ENCODE measurements at regions of chr5 and their contacts with region 1.

Region 1: GRCh38 chr5:119267958-119268386 is 87.8 kb upstream of the TNFAIP8 start:
- DNase-seq: peak; percentile 74 to 93 (median 83)
- H3K4me3 ChIP-seq: peak overlapping the region; percentile 53 to 83
- H3K4me3 Mint-ChIP-seq: peak overlapping the region; percentile 97 to 100 (median 100)
- H3K27ac ChIP-seq: peak overlapping the region; percentile 90
- H3K27ac Mint-ChIP-seq: peak overlapping the region; percentile 96 to 99 (median 97)
- H3K4me1 ChIP-seq: peaks cover 30% of the 10 kb centered on the region
- H3K4me1 Mint-ChIP-seq: peaks cover 37 to 72% (median 43%) of the 10 kb centered on the region in 4 donors
- H3K27me3 ChIP-seq: no peaks in the 10 kb centered on the region
- H3K27me3 Mint-ChIP-seq: no peaks in the 10 kb centered on the region

Region 2: DNA sequence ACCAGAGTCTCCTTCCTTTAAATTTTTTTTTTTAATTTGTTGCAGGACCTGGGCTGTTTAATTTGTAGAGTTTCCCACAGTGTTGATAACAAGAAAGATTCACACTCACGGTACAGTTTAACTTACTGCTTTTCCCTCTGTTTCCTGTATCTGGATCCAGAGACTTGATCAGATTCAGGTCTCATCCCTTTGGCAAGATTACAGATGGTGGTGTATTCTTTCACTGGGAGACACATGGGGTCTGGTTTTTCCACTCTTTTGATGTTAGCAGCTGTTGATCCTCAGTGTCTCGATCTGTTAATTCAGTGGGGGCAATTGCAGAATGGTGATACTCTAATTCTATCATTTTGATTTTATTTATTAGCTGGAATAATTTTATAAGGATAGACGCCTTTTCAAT is 12.4 kb after region 1 on chr5:
- CTCF ChIA-PET with region 1: interaction called, 10 read pairs
- POLR2A ChIA-PET with region 1: interaction called, 44 read pairs
- intact Hi-C with region 1: loop called (anchors 1 kb)
- DNase-seq: no peak
- H3K4me3 ChIP-seq: no peak overlapping the region
- H3K4me3 Mint-ChIP-seq: peak overlapping the region in 7 of 8 donors; percentile 30 to 92 (median 74)
- H3K27ac ChIP-seq: peak overlapping the region; percentile 25
- H3K27ac Mint-ChIP-seq: peak overlapping the region; percentile 1 to 99 (median 58)
- H3K4me1 ChIP-seq: peaks cover 99% of the 10 kb centered on the region
- H3K4me1 Mint-ChIP-seq: peaks cover 83 to 100% (median 93%) of the 10 kb centered on the region in 4 donors
- H3K27me3 ChIP-seq: no peaks in the 10 kb centered on the region
- H3K27me3 Mint-ChIP-seq: peaks cover 0 to 2% of the 10 kb centered on the region in 2 donors

Region 3: GRCh38 chr5:119302916-119303897 is 35.2 kb after region 1 on chr5:
- CTCF ChIA-PET with region 1: interaction called, 37 read pairs
- POLR2A ChIA-PET with region 1: interaction called, 187 read pairs
- intact Hi-C with region 1: loop called (anchors 1 kb)
- DNase-seq: no peak
- H3K4me3 ChIP-seq: peak overlapping the region; percentile 13 to 17
- H3K4me3 Mint-ChIP-seq: peak overlapping the region; percentile 17 to 96 (median 74)
- H3K27ac ChIP-seq: peak overlapping the region; percentile 43
- H3K27ac Mint-ChIP-seq: peak overlapping the region; percentile 80 to 99 (median 94)
- H3K4me1 ChIP-seq: peaks cover 83% of the 10 kb centered on the region
- H3K4me1 Mint-ChIP-seq: peaks cover 64 to 97% (median 79%) of the 10 kb centered on the region in 4 donors
- H3K27me3 ChIP-seq: no peaks in the 10 kb centered on the region
- H3K27me3 Mint-ChIP-seq: no peaks in the 10 kb centered on the region

Region 4: DNA sequence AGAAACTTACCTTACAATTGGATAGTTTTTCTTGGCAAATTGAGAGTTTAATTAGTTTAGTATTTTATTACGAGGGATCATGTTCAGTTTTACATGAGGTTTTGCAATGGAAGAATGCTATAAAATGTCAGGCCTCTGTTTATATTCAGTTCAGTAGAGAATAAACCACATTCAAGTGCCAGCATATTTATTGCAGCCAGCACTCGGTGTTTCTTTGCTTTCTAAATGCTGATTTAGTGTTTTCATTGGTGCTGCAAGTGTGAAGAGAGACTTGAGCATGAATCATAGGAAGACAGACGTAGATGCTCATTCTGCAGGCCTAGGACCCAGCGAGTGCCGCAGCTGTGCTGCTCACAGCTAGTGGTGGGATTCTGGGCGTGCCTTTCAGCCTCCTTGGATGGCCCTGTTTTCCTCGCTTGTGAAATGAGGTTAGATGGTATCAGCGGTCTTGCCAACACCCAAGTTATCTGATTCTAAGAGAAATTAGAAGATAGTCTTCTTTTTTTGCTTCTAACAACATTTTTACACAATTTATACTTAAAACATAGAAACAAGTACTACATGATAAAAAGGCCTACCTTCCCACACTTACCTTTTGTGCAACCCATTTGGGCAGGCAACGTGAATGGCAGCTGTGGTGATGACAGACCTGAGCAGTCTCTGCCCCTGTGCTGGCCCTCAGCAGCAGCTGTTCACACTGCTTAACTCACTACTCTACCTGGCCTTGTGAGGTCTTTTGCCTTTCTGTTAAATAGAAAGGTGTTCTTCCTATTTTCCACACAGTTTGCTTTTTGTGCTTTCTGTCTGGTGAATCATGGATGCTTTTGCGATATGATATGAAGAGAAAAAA is 61.0 kb after region 1 on chr5:
- CTCF ChIA-PET with region 1: interaction called, 25 read pairs
- POLR2A ChIA-PET with region 1: interaction called, 357 read pairs
- intact Hi-C with region 1: loop called (anchors 1 kb)
- DNase-seq: peak; percentile 56 to 89 (median 63)
- H3K4me3 ChIP-seq: peak overlapping the region; percentile 24 to 39
- H3K4me3 Mint-ChIP-seq: peak overlapping the region; percentile 70 to 89 (median 79)
- H3K27ac ChIP-seq: peak overlapping the region; percentile 75
- H3K27ac Mint-ChIP-seq: peak overlapping the region; percentile 93 to 97 (median 96)
- H3K4me1 ChIP-seq: peaks cover 91% of the 10 kb centered on the region
- H3K4me1 Mint-ChIP-seq: peaks cover 68 to 92% (median 78%) of the 10 kb centered on the region in 4 donors
- H3K27me3 ChIP-seq: no peaks in the 10 kb centered on the region
- H3K27me3 Mint-ChIP-seq: no peaks in the 10 kb centered on the region

Region 5: GRCh38 chr5:119355685-119356611 is 88.0 kb after region 1 on chr5 and contains the start of gene TNFAIP8:
- CTCF ChIA-PET with region 1: interaction called, 5 read pairs
- POLR2A ChIA-PET with region 1: interaction called, 30 read pairs
- intact Hi-C with region 1: loop called (anchors 5 kb)
- DNase-seq: peak in 2 of 5 donors; percentile 12 to 75
- H3K4me3 ChIP-seq: peak within 1 kb of the TSS; percentile 51 to 55
- H3K4me3 Mint-ChIP-seq: peak within 1 kb of the TSS; percentile 82 to 97 (median 90)
- H3K27ac ChIP-seq: peak within 1 kb of the TSS; percentile 78
- H3K27ac Mint-ChIP-seq: peak within 1 kb of the TSS; percentile 86 to 97 (median 93)
- H3K4me1 ChIP-seq: peaks cover 93% of the 10 kb centered on the region
- H3K4me1 Mint-ChIP-seq: peaks cover 75 to 95% (median 86%) of the 10 kb centered on the region in 4 donors
- H3K27me3 ChIP-seq: no peaks in the 10 kb centered on the region
- H3K27me3 Mint-ChIP-seq: no peaks in the 10 kb centered on the region
- total RNA-seq, gene TNFAIP8: 167 to 176 TPM

Region 6: DNA sequence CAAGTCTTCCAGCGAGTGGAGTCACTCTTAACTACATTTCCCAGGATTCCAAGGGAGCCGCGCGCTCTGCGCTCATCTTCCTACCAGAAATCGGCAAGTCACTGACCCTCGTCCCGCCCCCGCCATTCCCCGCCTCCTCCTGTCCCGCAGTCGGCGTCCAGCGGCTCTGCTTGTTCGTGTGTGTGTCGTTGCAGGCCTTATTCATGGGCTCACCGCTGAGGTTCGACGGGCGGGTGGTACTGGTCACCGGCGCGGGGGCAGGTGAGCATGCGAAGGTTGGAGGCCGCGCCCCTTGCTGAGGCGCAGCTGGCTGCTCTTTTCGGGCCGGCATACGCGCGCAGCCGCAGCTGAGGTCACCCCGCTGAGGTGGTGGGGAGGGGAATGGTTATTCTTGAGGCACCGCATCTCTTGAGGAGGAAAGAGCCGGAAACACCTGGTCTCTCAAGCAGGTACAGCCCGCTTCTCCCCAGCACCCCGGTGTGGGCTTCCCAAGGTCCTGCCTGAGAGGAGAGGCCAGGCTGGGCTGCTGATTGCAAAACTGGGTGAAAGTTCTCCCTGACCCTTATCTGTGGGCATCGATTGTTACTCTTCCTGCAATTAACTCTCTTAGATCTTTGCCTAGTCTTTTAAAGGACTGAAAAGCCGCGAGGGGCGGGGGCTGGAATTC is 184.5 kb after region 1 on chr5 and contains the start of gene HSD17B4:
- CTCF ChIA-PET with region 1: no interaction called
- POLR2A ChIA-PET with region 1: interaction called, 3 read pairs
- intact Hi-C with region 1: loop called (anchors 2 kb)
- DNase-seq: peak; percentile 82 to 86 (median 85)
- H3K4me3 ChIP-seq: peak within 1 kb of the TSS; percentile 74 to 84
- H3K4me3 Mint-ChIP-seq: peak within 1 kb of the TSS; percentile 92 to 98 (median 95)
- H3K27ac ChIP-seq: peak within 1 kb of the TSS; percentile 72
- H3K27ac Mint-ChIP-seq: peak within 1 kb of the TSS; percentile 83 to 95 (median 92)
- H3K4me1 ChIP-seq: peaks cover 17% of the 10 kb centered on the region
- H3K4me1 Mint-ChIP-seq: peaks cover 11 to 25% (median 17%) of the 10 kb centered on the region in 4 donors
- H3K27me3 ChIP-seq: no peaks in the 10 kb centered on the region
- H3K27me3 Mint-ChIP-seq: peaks cover 0 to 2% of the 10 kb centered on the region in 2 donors
- total RNA-seq, gene HSD17B4: 60.2 to 79.1 TPM

Measured in CD4-positive, alpha-beta memory T cell (primary cell).